Psoas muscle (tissue), 8 donors: ENCODE measurements at regions of chr10 and their contacts with region 1.

Region 1: DNA sequence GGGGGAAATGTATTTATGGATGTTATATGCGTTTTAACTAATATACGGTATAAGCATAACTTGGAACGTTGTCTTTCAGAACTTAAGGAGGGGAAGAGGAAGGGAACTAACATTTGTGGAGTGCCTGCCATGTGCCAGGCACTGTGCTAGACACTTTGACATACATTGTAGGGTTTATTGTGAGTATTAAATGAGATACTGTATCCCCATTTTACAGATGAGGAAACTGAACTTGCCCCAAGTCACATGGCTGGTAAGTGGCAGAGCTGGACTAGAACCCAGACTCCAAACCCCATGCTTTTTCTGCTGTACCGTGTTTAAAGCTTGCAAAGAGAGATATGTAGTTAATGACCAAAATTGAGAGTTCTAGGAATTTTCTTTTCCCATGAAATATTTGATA is 74.6 kb downstream of the CREM start:
- DNase-seq: no peak
- ATAC-seq: no peak
- H3K4me3 ChIP-seq: no peak overlapping the region
- H3K27ac ChIP-seq: no peak overlapping the region
- H3K4me1 ChIP-seq: no peaks in the 10 kb centered on the region
- H3K27me3 ChIP-seq: no peaks in the 10 kb centered on the region
- CTCF ChIP-seq: no peak

Region 2: DNA sequence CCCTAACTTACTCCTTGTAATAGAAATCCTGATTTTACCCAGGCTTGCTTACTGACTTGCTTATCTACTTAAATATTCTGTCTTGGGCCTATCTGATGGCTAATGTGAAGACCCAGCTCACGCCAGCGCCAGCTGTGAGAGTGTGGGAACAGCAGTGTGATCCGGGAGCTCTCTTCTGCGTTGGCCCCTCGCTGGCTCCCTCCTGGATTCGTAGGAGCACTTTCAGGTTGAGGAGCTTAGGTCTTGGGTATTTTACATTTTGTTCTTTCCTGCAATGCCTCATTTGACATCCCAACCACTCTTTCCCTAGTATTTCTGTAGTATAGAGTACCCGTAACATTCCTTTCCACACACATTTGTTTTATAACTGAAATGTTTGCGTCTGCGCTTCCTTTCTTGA is 22.9 kb before region 1 on chr10:
- intact Hi-C with region 1: loop called in 1 of 2 experiments (anchors 1 kb)
- DNase-seq: no peak
- ATAC-seq: no peak
- H3K4me3 ChIP-seq: no peak overlapping the region
- H3K27ac ChIP-seq: no peak overlapping the region
- H3K4me1 ChIP-seq: no peaks in the 10 kb centered on the region
- H3K27me3 ChIP-seq: no peaks in the 10 kb centered on the region
- CTCF ChIP-seq: no peak